OCI-LY7 (cell line): ENCODE measurements at regions of chr14 and their contacts with region 1.

Region 1: DNA sequence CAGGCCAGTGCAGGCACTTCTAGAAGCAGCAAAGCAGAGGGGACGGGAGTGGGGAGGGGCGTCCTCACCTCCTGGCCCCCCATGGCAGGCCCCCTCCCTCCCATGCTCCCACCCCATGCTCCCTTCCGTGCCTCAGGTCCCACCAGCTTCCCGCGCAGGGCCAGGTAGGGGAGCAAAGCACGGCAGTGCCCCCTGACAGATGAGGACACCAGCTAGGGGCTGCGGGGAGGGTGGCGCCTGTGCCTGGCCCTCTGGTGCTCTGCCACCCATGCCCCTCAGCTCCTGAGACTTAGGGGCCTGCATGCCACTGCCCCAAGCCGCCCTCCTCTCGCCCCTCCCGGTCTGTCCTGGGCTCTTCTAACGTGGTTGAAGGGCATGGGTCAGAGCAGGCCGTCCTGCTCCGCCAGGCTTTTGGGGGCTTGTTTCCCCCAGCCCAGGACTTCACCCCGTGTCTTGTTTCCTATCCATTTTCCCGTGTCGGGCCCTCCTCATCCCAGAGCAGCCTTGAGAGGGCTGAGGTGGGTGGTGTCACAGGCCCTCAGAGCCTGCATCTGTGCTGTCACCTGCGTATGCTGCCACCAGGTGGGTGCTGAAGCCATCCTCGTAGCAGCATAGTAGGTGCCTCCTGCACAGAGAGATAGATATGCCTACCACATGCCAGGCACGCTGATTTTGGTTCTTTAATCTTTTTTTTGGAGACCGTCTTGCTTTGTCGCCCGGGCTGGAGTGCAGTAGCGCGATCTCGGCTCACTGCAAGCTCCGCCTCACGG is 10.2 kb downstream of the TRMT61A start:
- DNase-seq: peak; percentile 30
- H3K4me3 ChIP-seq: no peak overlapping the region
- H3K27ac ChIP-seq: no peak overlapping the region
- H3K4me1 ChIP-seq: no peaks in the 10 kb centered on the region
- CTCF ChIP-seq: 0 out of 2 replicates have a peak, but pooled peaks have one; percentile 10

Region 2: DNA sequence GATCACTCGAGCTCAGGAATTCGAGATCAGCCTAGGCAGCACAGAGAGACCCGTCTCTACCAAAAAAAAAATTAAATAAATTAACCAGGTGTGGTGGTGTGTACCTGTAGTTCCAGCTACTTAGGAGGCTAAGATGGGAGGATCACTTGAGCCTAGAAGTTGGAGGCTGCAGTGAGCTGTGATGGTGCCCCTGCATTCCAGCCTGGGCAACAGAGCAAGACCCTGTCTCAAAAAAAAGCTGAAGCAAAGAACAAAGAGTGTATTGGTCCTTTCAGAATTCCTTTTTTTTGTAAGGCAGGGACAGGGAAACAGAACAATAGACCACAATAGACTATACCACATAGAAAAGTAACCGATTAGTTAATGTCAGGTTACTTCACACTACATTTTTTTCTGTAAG is 106.6 kb before region 1 on chr14:
- CTCF ChIA-PET with region 1: interaction called, 11 read pairs
- POLR2A ChIA-PET with region 1: no interaction called
- intact Hi-C with region 1: no loop called
- DNase-seq: no peak
- H3K4me3 ChIP-seq: no peak overlapping the region
- H3K27ac ChIP-seq: no peak overlapping the region
- H3K4me1 ChIP-seq: no peaks in the 10 kb centered on the region
- CTCF ChIP-seq: no peak

Region 3: DNA sequence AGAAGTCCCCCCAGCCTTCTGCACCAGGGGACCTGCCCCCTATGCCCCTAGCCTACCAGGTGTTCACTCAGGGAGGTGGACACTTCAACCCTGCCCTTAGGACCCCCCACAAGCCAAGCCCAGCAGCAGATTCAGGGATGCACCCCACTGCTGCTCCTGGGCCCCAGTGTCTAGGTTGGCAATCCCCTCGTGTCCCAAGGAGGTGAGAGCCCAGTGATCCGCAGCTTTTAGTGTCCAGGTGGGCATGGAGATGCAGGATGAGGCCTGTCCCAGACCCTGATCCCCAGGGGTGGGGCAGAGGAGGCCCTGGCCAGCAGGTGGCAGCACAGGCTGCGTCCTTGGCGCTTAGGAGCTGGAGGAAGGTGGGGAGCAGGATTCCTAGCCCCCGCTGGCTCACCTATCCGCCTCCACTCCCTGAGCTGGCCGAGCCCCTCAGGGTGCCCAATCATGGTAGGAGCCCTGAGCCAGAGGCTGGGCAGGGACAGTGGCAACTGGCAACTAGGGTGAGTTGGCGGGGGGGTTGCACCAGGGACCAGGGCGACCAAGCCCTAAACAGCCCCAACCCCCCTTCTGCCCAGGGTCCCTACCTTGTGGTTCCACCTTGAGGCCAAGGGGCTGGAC is 20.7 kb before region 1 on chr14:
- CTCF ChIA-PET with region 1: no interaction called
- POLR2A ChIA-PET with region 1: no interaction called
- intact Hi-C with region 1: loop called (anchors 2 kb)
- DNase-seq: peak; percentile 66
- H3K4me3 ChIP-seq: no peak overlapping the region
- H3K27ac ChIP-seq: no peak overlapping the region
- H3K4me1 ChIP-seq: peaks cover 17% of the 10 kb centered on the region
- CTCF ChIP-seq: peak; percentile 90